HEK293 (cell line): ENCODE measurements at regions of chr9 and their contacts with region 1.

Region 1: GRCh38 chr9:98263482-98264357 is 8.3 kb upstream of the TBC1D2 start:
- H3K4me3 ChIP-seq: no peak overlapping the region
- H3K27ac ChIP-seq: no peak overlapping the region
- H3K4me1 ChIP-seq: no peaks in the 10 kb centered on the region
- CTCF ChIP-seq: peak; percentile 75

Region 2: GRCh38 chr9:98080366-98080765 is 183.4 kb before region 1 on chr9:
- CTCF ChIA-PET with region 1: interaction called, 48 read pairs
- POLR2A ChIA-PET with region 1: no interaction called
- H3K4me3 ChIP-seq: no peak overlapping the region
- H3K27ac ChIP-seq: no peak overlapping the region
- H3K4me1 ChIP-seq: no peaks in the 10 kb centered on the region
- CTCF ChIP-seq: no peak

Region 3: DNA sequence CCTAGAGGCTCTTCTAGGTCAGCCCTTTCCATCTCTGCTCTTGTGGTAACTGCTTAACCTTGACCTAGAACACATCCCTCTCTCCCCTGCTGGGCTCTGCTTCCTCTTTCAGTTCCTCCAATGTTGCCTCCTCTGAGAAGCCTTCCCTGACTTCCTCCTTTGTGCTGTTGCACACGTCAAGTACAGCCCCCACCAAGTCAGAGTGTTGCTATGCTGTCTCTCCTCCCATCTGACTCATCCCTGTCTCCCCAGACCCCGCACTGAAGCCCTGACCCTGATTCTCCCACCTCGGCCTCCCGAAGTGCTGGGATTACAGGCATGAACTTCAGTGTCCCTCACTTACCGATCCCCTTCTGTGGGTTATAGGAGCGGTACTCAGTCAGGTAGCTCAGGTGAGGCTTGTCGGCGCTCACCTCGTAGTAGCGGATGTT is 134.3 kb before region 1 on chr9:
- CTCF ChIA-PET with region 1: no interaction called
- POLR2A ChIA-PET with region 1: no interaction called
- H3K4me3 ChIP-seq: no peak overlapping the region
- H3K27ac ChIP-seq: no peak overlapping the region
- H3K4me1 ChIP-seq: no peaks in the 10 kb centered on the region
- CTCF ChIP-seq: no peak

Region 4: DNA sequence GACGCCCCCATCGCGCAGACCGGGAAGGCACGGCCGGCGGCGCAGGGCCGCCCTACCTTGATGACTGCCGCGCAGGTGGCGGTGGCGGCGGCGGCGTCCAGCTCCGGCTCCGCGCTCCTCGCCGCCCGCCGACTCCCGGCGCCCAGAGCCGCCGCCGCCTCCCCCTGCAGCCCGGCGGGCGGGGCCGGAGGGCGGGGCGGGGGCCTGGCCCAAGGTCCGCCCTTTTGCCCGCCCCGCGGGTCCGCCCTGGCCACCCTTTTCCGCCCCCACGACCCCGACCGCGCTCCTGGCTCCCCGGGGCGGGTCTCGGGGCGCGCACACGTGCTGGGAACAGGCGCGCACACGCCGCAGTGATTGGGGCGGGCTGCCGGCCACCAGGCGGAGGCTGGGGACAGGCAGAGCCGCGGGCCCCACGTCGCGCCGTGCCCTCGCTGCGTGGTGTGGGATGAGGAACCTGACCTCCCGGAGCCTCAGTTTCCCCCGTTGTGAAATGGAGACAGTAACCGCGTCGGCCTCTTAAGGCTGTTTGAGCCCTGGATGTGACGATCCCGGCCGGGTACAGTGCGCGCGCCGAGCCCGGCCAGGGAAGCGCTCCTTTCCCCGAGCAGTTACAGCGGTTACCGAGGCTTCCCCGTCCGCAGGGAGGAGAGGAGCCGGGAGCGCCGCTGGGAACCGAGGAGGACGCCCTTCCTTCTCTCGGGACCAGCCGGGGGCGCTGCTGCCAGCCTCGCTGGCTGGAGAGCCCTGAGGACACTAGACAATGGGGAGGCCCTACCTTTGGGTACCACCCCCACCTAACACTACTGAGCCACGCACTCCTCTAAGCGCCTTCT is 71.0 kb before region 1 on chr9 and contains the start of gene CORO2A:
- CTCF ChIA-PET with region 1: interaction called, 11 read pairs
- POLR2A ChIA-PET with region 1: no interaction called
- H3K4me3 ChIP-seq: peak within 1 kb of the TSS; percentile 58
- H3K27ac ChIP-seq: peak within 1 kb of the TSS; percentile 32; the same call in 1 of the 2 replicates
- H3K4me1 ChIP-seq: no peaks in the 10 kb centered on the region
- CTCF ChIP-seq: peak; percentile 84

Region 5: DNA sequence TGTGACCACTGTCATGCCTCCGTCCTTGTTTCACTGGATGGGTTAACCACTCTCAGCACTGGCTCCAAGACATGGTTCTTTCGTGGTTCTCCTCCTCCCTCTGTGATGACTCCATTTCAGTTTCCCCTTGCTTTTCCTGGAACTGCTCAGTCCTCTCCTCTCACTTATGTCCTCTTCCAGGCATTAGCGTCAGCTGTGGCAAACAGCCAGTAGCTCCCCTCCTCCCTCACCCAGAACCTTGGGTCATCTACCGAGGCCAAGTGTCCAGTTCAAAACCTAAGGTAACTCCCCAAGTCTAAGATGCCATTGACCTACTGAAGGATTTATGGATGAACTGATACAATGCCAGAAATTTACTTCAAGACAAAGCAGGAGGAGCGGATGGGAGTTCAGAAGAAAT is 61.5 kb before region 1 on chr9:
- CTCF ChIA-PET with region 1: interaction called, 56 read pairs
- POLR2A ChIA-PET with region 1: no interaction called
- H3K4me3 ChIP-seq: no peak overlapping the region
- H3K27ac ChIP-seq: no peak overlapping the region
- H3K4me1 ChIP-seq: no peaks in the 10 kb centered on the region
- CTCF ChIP-seq: no peak

Region 6: GRCh38 chr9:98207606-98208005 is 56.1 kb before region 1 on chr9:
- CTCF ChIA-PET with region 1: interaction called, 56 read pairs
- POLR2A ChIA-PET with region 1: no interaction called
- H3K4me3 ChIP-seq: no peak overlapping the region
- H3K27ac ChIP-seq: no peak overlapping the region
- H3K4me1 ChIP-seq: no peaks in the 10 kb centered on the region
- CTCF ChIP-seq: no peak

Region 7: DNA sequence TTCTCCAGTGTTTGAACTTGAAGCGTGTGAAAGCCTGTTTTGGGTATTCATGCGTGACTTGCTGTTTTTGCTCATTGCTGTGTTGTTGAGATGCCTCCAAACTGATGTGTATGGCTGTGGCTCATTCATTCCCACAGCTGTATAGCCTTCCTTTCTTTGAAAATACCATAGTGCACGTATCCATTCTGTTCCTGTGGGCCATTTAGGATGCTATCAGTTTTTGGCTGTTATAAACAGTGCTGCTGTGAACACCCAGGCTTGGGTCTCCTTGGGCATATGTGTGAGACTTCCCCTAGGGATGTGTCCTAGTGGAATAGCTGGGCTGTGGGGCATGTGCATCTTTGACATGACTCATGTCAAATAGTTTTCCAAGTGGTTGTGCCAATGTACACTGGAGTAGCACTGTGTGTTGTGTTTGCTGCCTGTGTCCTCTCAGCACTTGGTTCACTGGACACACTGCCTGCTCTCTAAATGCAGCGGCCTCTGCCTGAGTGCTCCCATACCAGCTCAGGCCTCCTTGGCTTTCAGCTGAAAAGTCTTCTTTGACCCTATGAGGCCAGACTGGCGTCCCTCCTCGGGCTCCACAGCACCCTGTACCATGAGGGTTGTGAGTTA is 94.3 kb after region 1 on chr9:
- CTCF ChIA-PET with region 1: no interaction called
- POLR2A ChIA-PET with region 1: no interaction called
- H3K4me3 ChIP-seq: no peak overlapping the region
- H3K27ac ChIP-seq: no peak overlapping the region
- H3K4me1 ChIP-seq: no peaks in the 10 kb centered on the region
- CTCF ChIP-seq: no peak

Region 8: DNA sequence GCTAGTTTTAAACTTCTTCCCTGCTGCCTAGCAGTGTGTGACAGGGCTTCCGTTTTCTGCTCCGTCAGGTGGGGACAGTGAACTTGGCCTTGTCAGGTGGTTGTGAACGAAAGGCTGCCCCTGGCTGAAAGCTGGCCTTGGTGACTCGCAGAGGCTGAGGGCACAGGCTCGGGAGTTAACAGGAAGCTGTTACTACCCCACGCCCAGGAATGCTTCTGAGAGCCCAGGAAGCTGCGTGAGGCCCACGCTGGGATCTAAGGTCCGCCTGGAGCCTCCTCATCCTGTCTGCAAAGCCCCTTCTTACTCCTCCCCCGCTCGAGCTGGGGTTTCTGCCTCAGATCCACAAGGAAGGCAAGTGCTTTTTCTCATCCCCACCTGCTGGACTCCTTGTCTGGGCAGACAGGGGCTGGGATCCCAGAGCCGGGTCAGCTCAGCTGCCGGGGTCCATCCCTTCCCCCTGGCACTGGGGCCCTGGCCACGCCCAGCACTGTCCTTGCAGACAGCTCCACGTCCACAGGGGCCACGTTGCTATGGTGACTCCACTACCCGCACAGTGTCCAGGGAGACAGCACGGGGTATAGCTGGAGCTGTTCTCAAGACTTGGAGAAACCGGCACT is 116.5 kb after region 1 on chr9:
- CTCF ChIA-PET with region 1: no interaction called
- POLR2A ChIA-PET with region 1: no interaction called
- H3K4me3 ChIP-seq: no peak overlapping the region
- H3K27ac ChIP-seq: no peak overlapping the region
- H3K4me1 ChIP-seq: no peaks in the 10 kb centered on the region
- CTCF ChIP-seq: no peak